ENCODE measurements at regions of chr5 and their contacts with region 1.

Region 1: DNA sequence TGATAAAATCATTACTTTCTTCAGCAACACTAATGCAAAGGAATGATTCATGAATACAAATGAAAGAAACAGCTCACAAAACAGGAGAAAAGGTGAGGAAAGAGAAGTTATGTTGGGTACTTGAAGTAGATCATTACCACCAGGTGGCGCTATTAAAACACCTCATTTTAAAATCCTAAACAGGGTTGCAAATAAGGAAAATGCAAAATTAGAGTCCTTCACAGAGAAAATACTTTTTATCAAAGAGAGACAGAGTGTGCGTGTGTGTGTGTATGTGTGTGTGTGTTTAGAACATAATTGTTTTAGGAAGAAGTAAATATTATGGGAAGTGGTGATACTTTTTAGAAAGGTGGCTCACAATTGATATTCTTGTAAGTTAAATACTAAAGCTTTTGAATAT is 49.5 kb upstream of the CD180 start:
- DNase-seq: peak in 3 of 5 donors; percentile 30 to 53 (median 50)
- H3K4me3 ChIP-seq: no peak overlapping the region
- H3K27ac ChIP-seq: no peak overlapping the region
- H3K4me1 ChIP-seq: peaks cover 5% of the 10 kb centered on the region
- H3K27me3 ChIP-seq: no peaks in the 10 kb centered on the region
- CTCF ChIP-seq: peak; percentile 74 to 90 (median 81)
- EP300 ChIP-seq: no peak
- POLR2A ChIP-seq: no peak

Region 2: DNA sequence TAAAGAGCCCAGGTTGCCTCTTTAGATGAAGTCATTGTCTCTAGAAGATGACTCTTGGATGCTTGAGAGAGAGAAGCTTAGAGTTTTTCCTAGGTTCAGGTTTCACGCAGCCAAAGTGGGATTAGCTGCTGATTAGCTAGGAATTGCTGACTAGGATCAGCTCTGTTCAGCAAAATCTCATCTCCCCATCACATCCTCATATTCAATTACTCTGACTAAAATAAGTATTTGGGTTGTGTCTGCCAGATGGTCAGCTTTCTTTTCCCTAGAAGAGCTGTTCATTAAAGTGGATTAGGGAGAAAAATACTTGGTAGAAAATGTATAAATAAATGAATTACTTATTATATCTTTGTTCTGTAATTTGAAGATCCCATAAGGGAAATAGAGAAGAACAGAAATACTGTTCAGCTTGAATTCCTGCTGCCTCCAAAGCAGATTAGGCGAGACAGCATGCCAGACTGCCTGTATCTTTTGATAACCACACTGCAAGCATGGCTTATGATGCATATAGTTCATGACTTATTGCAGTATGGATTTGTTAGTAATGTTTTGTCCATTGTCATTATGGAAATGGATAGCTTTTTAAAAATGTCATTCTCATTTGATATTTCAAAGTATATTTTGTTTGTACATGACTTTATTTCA is 135.2 kb after region 1 on chr5:
- intact Hi-C with region 1: loop called in 1 of 4 experiments (anchors 10 kb)
- DNase-seq: no peak
- H3K4me3 ChIP-seq: no peak overlapping the region
- H3K27ac ChIP-seq: no peak overlapping the region
- H3K4me1 ChIP-seq: no peaks in the 10 kb centered on the region
- H3K27me3 ChIP-seq: no peaks in the 10 kb centered on the region
- CTCF ChIP-seq: no peak
- EP300 ChIP-seq: no peak
- POLR2A ChIP-seq: no peak

Region 3: DNA sequence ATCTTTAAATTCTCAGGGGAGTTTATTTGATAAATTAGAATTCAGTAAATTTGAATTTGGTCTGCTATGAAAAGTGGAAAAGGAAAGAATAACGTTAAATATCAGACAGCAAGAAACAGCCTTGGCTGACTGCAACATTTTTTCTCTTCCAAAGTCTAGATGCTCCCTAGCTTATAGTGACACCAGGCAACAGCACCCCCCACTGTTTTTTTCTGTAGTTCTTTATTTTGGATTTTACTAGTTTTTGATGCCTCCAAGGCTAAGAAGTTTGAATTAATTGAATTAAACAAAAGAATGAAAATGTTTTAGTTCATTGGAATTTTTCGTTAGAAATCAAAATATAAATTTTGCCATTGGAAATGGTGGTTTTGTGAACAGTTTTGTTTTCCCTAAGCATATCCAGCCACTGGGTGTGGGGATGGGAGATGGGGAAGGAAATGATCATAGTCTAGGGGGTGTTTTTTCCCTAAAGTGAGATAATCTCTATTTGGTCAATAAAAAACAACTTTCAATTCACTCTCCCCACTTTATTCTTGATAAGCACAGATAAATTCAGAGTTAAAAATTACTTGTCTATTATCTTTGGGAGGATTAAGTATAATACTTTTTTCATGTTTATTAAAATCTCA is 149.8 kb after region 1 on chr5:
- intact Hi-C with region 1: loop called in 1 of 4 experiments (anchors 10 kb)
- DNase-seq: no peak
- H3K4me3 ChIP-seq: no peak overlapping the region
- H3K27ac ChIP-seq: no peak overlapping the region
- H3K4me1 ChIP-seq: peaks cover 1% of the 10 kb centered on the region
- H3K27me3 ChIP-seq: no peaks in the 10 kb centered on the region
- CTCF ChIP-seq: peak in 1 of 3 donors; percentile 33
- EP300 ChIP-seq: no peak
- POLR2A ChIP-seq: no peak

Region 4: GRCh38 chr5:68215208-68215897 is 969.2 kb after region 1 on chr5 and contains the start of gene PIK3R1:
- intact Hi-C with region 1: loop called in 1 of 4 experiments (anchors 10 kb)
- DNase-seq: peak; percentile 96 to 98 (median 96)
- H3K4me3 ChIP-seq: peak within 1 kb of the TSS; percentile 98
- H3K27ac ChIP-seq: peak within 1 kb of the TSS; percentile 96 to 97
- H3K4me1 ChIP-seq: peaks cover 4% of the 10 kb centered on the region
- H3K27me3 ChIP-seq: no peaks in the 10 kb centered on the region
- CTCF ChIP-seq: peak; percentile 40 to 75 (median 51)
- EP300 ChIP-seq: no peak
- POLR2A ChIP-seq: peak; percentile 95
- total RNA-seq, gene PIK3R1: 59.5 to 206 (median 82.0) TPM

Region 5: GRCh38 chr5:68252673-68253623 is 1006.8 kb after region 1 on chr5:
- intact Hi-C with region 1: loop called in 2 of 4 experiments (anchors 5 to 10 kb)
- DNase-seq: peak; percentile 59 to 75 (median 62)
- H3K4me3 ChIP-seq: no peak overlapping the region
- H3K27ac ChIP-seq: peak overlapping the region in 1 of 2 donors; percentile 38
- H3K4me1 ChIP-seq: peaks cover 25% of the 10 kb centered on the region
- H3K27me3 ChIP-seq: no peaks in the 10 kb centered on the region
- CTCF ChIP-seq: peak; percentile 58 to 72 (median 62)
- EP300 ChIP-seq: no peak
- POLR2A ChIP-seq: no peak

Region 6: DNA sequence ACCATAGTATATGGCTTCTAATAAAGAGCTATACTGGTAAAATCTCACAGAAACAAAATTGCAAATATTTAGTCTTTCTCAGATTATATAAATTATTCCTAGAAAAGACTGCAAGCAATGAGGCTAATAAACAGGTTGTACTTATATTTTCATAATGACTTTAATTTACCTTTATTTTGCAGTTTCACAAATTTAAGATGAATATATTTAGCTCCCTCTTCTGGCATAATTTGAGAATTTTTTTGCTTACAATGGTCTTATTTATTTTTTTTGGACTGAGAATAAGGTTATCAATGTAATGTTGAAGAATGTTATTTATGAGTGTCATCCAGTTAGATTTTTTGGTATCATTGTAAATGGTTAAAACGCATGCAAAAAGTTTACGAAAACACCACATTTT is 1026.2 kb after region 1 on chr5:
- intact Hi-C with region 1: loop called in 1 of 4 experiments (anchors 10 kb)
- DNase-seq: no peak
- H3K4me3 ChIP-seq: no peak overlapping the region
- H3K27ac ChIP-seq: no peak overlapping the region
- H3K4me1 ChIP-seq: peaks cover 6% of the 10 kb centered on the region
- H3K27me3 ChIP-seq: no peaks in the 10 kb centered on the region
- CTCF ChIP-seq: peak in 1 of 3 donors; percentile 28
- EP300 ChIP-seq: no peak
- POLR2A ChIP-seq: no peak

Region 7: GRCh38 chr5:68962757-68963484 is 1716.8 kb after region 1 on chr5:
- intact Hi-C with region 1: loop called in 1 of 4 experiments (anchors 10 kb)
- DNase-seq: peak; percentile 62 to 79 (median 71)
- H3K4me3 ChIP-seq: no peak overlapping the region
- H3K27ac ChIP-seq: peak overlapping the region in 1 of 2 donors; percentile 40
- H3K4me1 ChIP-seq: no peaks in the 10 kb centered on the region
- H3K27me3 ChIP-seq: no peaks in the 10 kb centered on the region
- CTCF ChIP-seq: peak; percentile 44 to 78 (median 77)
- EP300 ChIP-seq: no peak
- POLR2A ChIP-seq: no peak

Measured in ovary (tissue), 10 donors.